ENCODE measurements at regions of chr10 and their contacts with region 1.

Region 1: DNA sequence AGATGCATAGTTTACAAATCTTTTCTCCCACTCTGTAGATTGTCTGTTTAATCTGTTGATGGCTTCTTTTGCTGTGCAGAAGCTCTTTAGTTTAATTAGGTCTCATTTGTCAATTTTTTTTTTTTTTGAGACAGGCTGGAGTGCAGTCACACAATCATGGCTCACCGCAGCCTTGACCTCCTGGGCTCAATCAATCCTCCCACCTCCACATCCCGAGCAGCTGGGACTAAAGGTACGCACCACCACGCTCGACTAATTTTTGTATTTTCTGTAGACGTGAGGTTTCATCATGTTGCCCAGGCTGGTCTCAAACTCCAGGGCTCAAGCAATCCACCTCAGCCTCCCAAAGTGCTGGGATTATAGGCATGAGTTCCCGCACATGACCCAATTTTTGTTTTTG is 1655.8 kb downstream of the REEP3 start:
- DNase-seq: no peak
- ATAC-seq: no peak
- H3K4me3 ChIP-seq: no peak overlapping the region
- H3K27ac ChIP-seq: no peak overlapping the region
- H3K4me1 ChIP-seq: no peaks in the 10 kb centered on the region
- H3K27me3 ChIP-seq: no peaks in the 10 kb centered on the region
- CTCF ChIP-seq: no peak
- EP300 ChIP-seq: no peak
- POLR2A ChIP-seq: no peak
- RAD21 ChIP-seq: no peak

Region 2: GRCh38 chr10:64846700-64847099 is 330.3 kb before region 1 on chr10:
- CTCF ChIA-PET with region 1: no interaction called
- POLR2A ChIA-PET with region 1: no interaction called
- RAD21 ChIA-PET with region 1: no interaction called
- SMC1A ChIA-PET with region 1: no interaction called
- in situ Hi-C with region 1: no loop called
- intact Hi-C with region 1: no loop called
- DNase-seq: no peak
- ATAC-seq: no peak
- H3K4me3 ChIP-seq: no peak overlapping the region
- H3K27ac ChIP-seq: no peak overlapping the region
- H3K4me1 ChIP-seq: no peaks in the 10 kb centered on the region
- H3K27me3 ChIP-seq: no peaks in the 10 kb centered on the region
- CTCF ChIP-seq: no peak
- EP300 ChIP-seq: no peak
- POLR2A ChIP-seq: no peak
- RAD21 ChIP-seq: no peak

Region 3: DNA sequence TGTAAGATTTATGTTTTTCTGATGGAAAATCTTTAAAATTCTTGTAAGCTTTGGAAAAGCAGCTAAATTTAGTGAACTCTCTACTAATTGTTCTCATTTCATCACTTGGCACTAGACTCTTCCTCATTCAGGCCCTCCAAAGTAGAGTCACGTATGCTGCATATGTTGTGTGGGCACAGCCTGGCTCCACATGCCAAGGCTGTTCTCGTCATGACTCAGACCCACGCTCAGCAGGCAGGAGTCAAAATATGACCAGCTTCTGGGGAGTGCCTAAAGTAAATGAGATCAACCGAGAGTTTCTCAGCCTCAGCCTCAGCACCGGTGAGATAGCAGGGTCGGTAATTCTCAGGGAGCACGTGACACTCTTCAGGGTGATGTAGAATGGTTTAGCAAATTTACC is 17.1 kb after region 1 on chr10:
- CTCF ChIA-PET with region 1: no interaction called
- POLR2A ChIA-PET with region 1: no interaction called
- RAD21 ChIA-PET with region 1: no interaction called
- SMC1A ChIA-PET with region 1: no interaction called
- in situ Hi-C with region 1: no loop called
- intact Hi-C with region 1: loop called (anchors 1 kb)
- DNase-seq: no peak
- ATAC-seq: no peak
- H3K4me3 ChIP-seq: no peak overlapping the region
- H3K27ac ChIP-seq: no peak overlapping the region
- H3K4me1 ChIP-seq: no peaks in the 10 kb centered on the region
- H3K27me3 ChIP-seq: no peaks in the 10 kb centered on the region
- CTCF ChIP-seq: no peak
- EP300 ChIP-seq: no peak
- POLR2A ChIP-seq: no peak
- RAD21 ChIP-seq: no peak

Measured in GM12878 (cell line).